ENCODE measurements at regions of chr3 and their contacts with region 1.

Region 1: GRCh38 chr3:111547631-111548030 is 5.6 kb downstream of the CD96 start:
- DNase-seq: peak; percentile 40
- H3K4me3 Mint-ChIP-seq: no peak overlapping the region
- H3K27ac Mint-ChIP-seq: no peak overlapping the region
- H3K4me1 Mint-ChIP-seq: peaks cover 40% of the 10 kb centered on the region
- H3K27me3 Mint-ChIP-seq: no peaks in the 10 kb centered on the region

Region 2: GRCh38 chr3:111071257-111072015 is 476.2 kb before region 1 on chr3 and contains the start of gene NECTIN3:
- intact Hi-C with region 1: loop called (anchors 2 kb)
- DNase-seq: peak; percentile 70
- H3K4me3 Mint-ChIP-seq: peak within 1 kb of the TSS; percentile 87
- H3K27ac Mint-ChIP-seq: peak within 1 kb of the TSS; percentile 58
- H3K4me1 Mint-ChIP-seq: peaks cover 23% of the 10 kb centered on the region
- H3K27me3 Mint-ChIP-seq: peaks cover 69% of the 10 kb centered on the region
- total RNA-seq, gene NECTIN3: 2.2 and 2.6 TPM in 2 replicates

Region 3: GRCh38 chr3:111566844-111567243 is 19.2 kb after region 1 on chr3:
- intact Hi-C with region 1: loop called (anchors 2 kb)
- DNase-seq: no peak
- H3K4me3 Mint-ChIP-seq: no peak overlapping the region
- H3K27ac Mint-ChIP-seq: peak overlapping the region; percentile 53
- H3K4me1 Mint-ChIP-seq: peaks cover 50% of the 10 kb centered on the region
- H3K27me3 Mint-ChIP-seq: no peaks in the 10 kb centered on the region

Region 4: GRCh38 chr3:111978493-111979433 is 431.1 kb after region 1 on chr3 and contains the start of gene ABHD10:
- intact Hi-C with region 1: loop called (anchors 5 kb)
- DNase-seq: peak; percentile 94
- H3K4me3 Mint-ChIP-seq: peak within 1 kb of the TSS; percentile 78
- H3K27ac Mint-ChIP-seq: peak within 1 kb of the TSS; percentile 77
- H3K4me1 Mint-ChIP-seq: peaks cover 39% of the 10 kb centered on the region
- H3K27me3 Mint-ChIP-seq: peaks cover 19% of the 10 kb centered on the region
- total RNA-seq, gene ABHD10: 46.3 and 46.9 TPM in 2 replicates